CD8-positive, alpha-beta memory T cell (primary cell): ENCODE measurements at regions of chr2 and their contacts with region 1.

Region 1: DNA sequence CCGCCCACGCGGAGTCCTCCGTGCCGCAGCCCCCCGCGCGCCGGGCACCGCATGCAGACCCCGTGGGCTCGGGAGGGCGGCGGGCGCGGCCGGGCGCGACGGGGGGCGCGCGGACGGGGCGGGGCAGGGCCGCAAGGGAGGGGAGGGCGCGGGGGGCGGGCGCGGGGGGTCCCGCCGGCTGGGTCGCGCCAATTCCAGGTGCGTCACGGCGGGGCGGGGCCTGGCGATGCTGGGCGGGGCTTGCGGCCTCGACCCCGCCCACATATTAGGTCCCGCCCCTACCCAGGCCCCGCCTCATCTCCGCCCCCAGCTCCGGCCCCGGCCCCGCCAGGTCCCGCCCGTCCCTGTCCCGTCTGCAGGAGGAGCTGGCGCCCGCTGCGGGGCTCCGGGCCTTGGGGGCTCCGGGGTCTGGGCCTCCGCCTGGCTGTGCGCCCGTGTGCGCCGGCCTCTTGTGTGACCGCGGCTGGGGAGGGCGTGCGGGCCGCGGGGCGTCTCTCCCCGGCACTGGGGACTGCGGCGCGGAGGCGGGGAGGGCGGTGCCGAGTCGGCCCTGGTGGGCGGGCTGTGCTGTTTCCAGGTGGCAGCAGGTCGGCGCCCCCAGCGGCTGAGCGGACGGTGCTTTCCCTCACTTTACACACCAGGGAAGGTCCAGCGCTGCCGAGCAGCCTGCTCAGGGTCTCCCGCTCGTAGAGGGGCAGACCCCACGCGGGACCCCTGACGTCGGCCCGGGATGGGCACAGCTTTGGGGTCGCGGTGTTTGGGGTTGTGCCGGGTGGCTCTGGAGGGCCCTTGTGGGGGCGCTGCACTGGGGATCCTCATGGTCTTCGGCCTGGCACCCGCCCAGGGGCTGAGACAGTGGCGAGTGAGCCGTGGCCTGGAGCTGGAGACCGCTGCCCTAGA is 543 bp downstream of the ING5 start:
- DNase-seq: peak; percentile 85 to 94 (median 91)
- H3K4me3 ChIP-seq: peak overlapping the region; percentile 68
- H3K4me3 Mint-ChIP-seq: peak overlapping the region; percentile 78 to 88 (median 84)
- H3K27ac ChIP-seq: peak overlapping the region; percentile 65
- H3K27ac Mint-ChIP-seq: peak overlapping the region; percentile 56 to 97 (median 86)
- H3K4me1 ChIP-seq: peaks cover 7% of the 10 kb centered on the region
- H3K4me1 Mint-ChIP-seq: peaks cover 14 to 26% (median 20%) of the 10 kb centered on the region in 3 donors
- H3K27me3 ChIP-seq: no peaks in the 10 kb centered on the region
- H3K27me3 Mint-ChIP-seq: no peaks in the 10 kb centered on the region

Region 2: GRCh38 chr2:241673189-241673663 is 29.2 kb before region 1 on chr2:
- CTCF ChIA-PET with region 1: no interaction called
- POLR2A ChIA-PET with region 1: no interaction called
- DNase-seq: no peak
- H3K4me3 ChIP-seq: no peak overlapping the region
- H3K4me3 Mint-ChIP-seq: no peak overlapping the region
- H3K27ac ChIP-seq: no peak overlapping the region
- H3K27ac Mint-ChIP-seq: peak overlapping the region in 3 of 8 donors; percentile 40 to 74 (median 73)
- H3K4me1 ChIP-seq: no peaks in the 10 kb centered on the region
- H3K4me1 Mint-ChIP-seq: peaks cover 4 to 10% (median 6%) of the 10 kb centered on the region in 3 donors
- H3K27me3 ChIP-seq: no peaks in the 10 kb centered on the region
- H3K27me3 Mint-ChIP-seq: no peaks in the 10 kb centered on the region

Region 3: GRCh38 chr2:241686649-241687425 is 15.5 kb before region 1 on chr2 and contains the start of gene DTYMK:
- CTCF ChIA-PET with region 1: interaction called, 13 read pairs
- POLR2A ChIA-PET with region 1: interaction called, 50 read pairs
- DNase-seq: peak; percentile 93 to 98 (median 96)
- H3K4me3 ChIP-seq: peak within 1 kb of the TSS; percentile 86
- H3K4me3 Mint-ChIP-seq: peak within 1 kb of the TSS; percentile 89 to 99 (median 94)
- H3K27ac ChIP-seq: peak within 1 kb of the TSS; percentile 75
- H3K27ac Mint-ChIP-seq: peak within 1 kb of the TSS; percentile 84 to 95 (median 94)
- H3K4me1 ChIP-seq: peaks cover 25% of the 10 kb centered on the region
- H3K4me1 Mint-ChIP-seq: peaks cover 24 to 35% (median 29%) of the 10 kb centered on the region in 3 donors
- H3K27me3 ChIP-seq: no peaks in the 10 kb centered on the region
- H3K27me3 Mint-ChIP-seq: no peaks in the 10 kb centered on the region
- total RNA-seq, gene DTYMK: 131 to 134 TPM

Region 4: DNA sequence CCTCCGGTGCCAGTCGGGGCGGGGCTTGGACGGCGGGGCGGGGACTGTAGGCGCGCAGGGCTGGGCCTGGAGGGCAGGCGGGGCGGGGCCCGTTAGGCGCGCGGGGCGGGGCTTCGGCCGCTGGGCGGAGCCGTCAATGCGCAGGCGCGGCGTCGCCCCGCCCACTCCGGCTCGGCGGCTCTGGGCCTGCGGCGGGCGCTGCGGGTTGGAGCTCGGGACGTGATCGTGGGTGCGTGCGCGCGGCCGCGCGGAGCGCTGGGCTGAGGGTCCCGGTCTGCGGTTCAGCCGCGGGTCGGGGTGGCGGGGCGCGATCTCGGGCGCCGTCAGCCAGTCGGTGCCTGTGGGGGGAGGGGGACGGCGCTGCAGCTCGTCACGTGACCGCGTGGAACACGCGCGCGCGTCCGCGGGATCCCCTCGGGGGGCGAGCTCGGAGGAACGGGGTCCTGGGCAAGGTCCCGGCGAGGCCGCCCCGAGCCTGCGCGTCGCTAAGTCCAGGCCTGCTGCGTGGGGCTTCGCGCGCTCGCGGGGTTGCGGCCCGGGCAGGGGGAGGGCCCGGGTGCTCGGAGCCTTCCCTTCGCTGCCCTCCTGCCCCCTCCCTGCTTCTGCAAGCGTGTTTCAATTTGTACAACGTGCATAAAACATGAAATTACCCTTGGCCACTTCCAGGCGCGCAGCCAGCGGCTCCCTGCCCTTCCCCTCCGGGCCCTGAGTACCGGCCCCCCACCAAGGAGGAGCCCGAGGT is 32.3 kb after region 1 on chr2 and contains the start of gene D2HGDH:
- CTCF ChIA-PET with region 1: interaction called, 30 read pairs
- POLR2A ChIA-PET with region 1: interaction called, 24 read pairs
- DNase-seq: peak; percentile 90 to 95 (median 93)
- H3K4me3 ChIP-seq: peak within 1 kb of the TSS; percentile 69
- H3K4me3 Mint-ChIP-seq: peak within 1 kb of the TSS; percentile 80 to 92 (median 85)
- H3K27ac ChIP-seq: peak within 1 kb of the TSS; percentile 74
- H3K27ac Mint-ChIP-seq: peak within 1 kb of the TSS; percentile 56 to 95 (median 78)
- H3K4me1 ChIP-seq: peaks cover 12% of the 10 kb centered on the region
- H3K4me1 Mint-ChIP-seq: peaks cover 29 to 62% (median 33%) of the 10 kb centered on the region in 3 donors
- H3K27me3 ChIP-seq: no peaks in the 10 kb centered on the region
- H3K27me3 Mint-ChIP-seq: no peaks in the 10 kb centered on the region
- total RNA-seq, gene D2HGDH: 22.9 to 23.4 TPM